Lower leg skin (tissue), 4 donors: ENCODE measurements at regions of chr20 and their contacts with region 1.

Region 1: DNA sequence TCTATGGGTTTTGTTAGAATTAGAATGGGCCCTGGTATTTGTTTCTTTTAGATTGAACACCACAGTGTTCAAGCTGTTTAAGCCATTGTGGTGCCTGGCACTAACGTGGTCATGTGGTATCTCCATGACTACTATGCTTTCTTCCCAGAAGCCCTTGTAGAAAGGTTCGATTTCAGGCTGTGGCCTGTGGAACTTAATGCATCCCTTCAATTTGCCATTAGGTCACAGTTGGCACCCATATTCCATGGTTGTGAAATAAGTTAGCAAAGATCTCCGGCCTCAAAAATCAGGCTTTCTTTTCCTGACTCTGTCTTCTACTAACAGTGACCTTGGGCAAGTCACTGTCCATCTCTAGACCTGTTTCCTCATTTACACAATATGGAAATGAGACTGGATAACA is 31.3 kb upstream of the AAR2 start:
- DNase-seq: no peak
- H3K4me3 ChIP-seq: no peak overlapping the region
- CTCF ChIP-seq: no peak
- POLR2A ChIP-seq: no peak

Region 2: GRCh38 chr20:36439040-36439730 is 234.2 kb after region 1 on chr20:
- intact Hi-C with region 1: loop called (anchors 5 kb)
- DNase-seq: peak; percentile 46 to 91
- H3K4me3 ChIP-seq: no peak overlapping the region
- CTCF ChIP-seq: peak in 1 of 3 donors; percentile 47
- POLR2A ChIP-seq: no peak